SK-N-SH (cell line): ENCODE measurements at regions of chr3 and their contacts with region 1.

Region 1: DNA sequence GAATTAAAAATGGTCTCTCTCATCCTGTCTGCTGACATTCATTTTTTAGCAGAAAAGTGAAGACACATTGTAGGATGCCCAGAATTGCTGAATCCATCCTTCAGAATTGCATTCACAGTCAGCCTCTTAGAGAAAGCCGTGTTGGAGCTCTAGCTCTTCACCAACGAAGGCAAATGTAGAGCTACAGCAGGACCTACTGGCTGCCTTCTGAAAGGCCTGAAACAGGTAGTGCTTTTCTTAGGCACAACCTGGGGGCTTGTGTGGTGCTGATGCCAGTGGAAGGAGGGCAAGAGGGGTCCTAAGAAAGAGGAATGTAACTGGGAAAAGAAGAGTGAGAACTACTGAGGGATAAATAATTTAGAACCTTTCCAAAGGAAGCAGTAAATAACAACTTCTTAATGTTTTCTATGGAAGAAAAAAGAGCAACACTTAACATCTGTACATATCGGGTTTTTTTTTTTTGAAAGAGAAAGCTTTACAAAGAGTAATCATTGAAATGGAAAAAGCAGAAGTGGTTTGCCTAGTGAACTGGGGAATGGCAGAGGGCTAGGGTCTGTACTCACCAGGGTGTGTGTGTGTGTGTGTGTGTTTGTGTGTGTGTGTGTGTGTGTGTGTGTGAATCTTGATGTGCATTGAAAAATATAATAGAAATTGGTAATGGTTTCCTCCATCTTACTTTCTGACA is 297.8 kb downstream of the SATB1 start:
- DNase-seq: no peak
- H3K4me3 ChIP-seq: no peak overlapping the region
- H3K27ac ChIP-seq: peak overlapping the region in 1 of 2 experiments; percentile 98; a peak in 2 of 4 replicates
- H3K4me1 ChIP-seq: peaks cover 0 to 23% of the 10 kb centered on the region in 2 experiments; a peak in 3 of 4 replicates
- H3K27me3 ChIP-seq: no peaks in the 10 kb centered on the region
- CTCF ChIP-seq: no peak
- EP300 ChIP-seq: no peak
- RAD21 ChIP-seq: peak; percentile 47

Region 2: GRCh38 chr3:18111796-18112232 is 15.5 kb before region 1 on chr3:
- CTCF ChIA-PET with region 1: interaction called, 17 read pairs
- POLR2A ChIA-PET with region 1: interaction called, 29 read pairs
- DNase-seq: peak; percentile 52
- H3K4me3 ChIP-seq: peak overlapping the region; percentile 19 to 31; a peak in 3 of 4 replicates
- H3K27ac ChIP-seq: peak overlapping the region; percentile 30 to 90; a peak in 3 of 4 replicates
- H3K4me1 ChIP-seq: peaks cover 0 to 25% of the 10 kb centered on the region in 2 experiments; a peak in 2 of 4 replicates
- H3K27me3 ChIP-seq: no peaks in the 10 kb centered on the region
- CTCF ChIP-seq: no peak
- EP300 ChIP-seq: 0 out of 4 replicates have a peak, but pooled peaks of 1 of the 2 experiments have one; percentile 11
- RAD21 ChIP-seq: no peak; the same call in 1 of the 2 replicates

Region 3: GRCh38 chr3:18469775-18470174 is 342.5 kb after region 1 on chr3:
- CTCF ChIA-PET with region 1: no interaction called
- POLR2A ChIA-PET with region 1: no interaction called
- DNase-seq: no peak
- H3K4me3 ChIP-seq: no peak overlapping the region
- H3K27ac ChIP-seq: no peak overlapping the region
- H3K4me1 ChIP-seq: no peaks in the 10 kb centered on the region
- H3K27me3 ChIP-seq: no peaks in the 10 kb centered on the region
- CTCF ChIP-seq: no peak
- EP300 ChIP-seq: no peak
- RAD21 ChIP-seq: no peak